Endothelial cell of umbilical vein (primary cell): ENCODE measurements at regions of chr11 and their contacts with region 1.

Region 1: GRCh38 chr11:61129639-61130523 is 27.6 kb downstream of the CD5 start:
- DNase-seq: peak; percentile 93
- H3K4me3 ChIP-seq: no peak overlapping the region
- H3K27ac ChIP-seq: peak overlapping the region; percentile 2
- H3K4me1 ChIP-seq: peaks cover 3% of the 10 kb centered on the region
- H3K27me3 ChIP-seq: peaks cover 9 to 10% of the 10 kb centered on the region in 2 experiments
- CTCF ChIP-seq: peak; percentile 100
- POLR2A ChIP-seq: no peak

Region 2: GRCh38 chr11:60913793-60914632 is 215.9 kb before region 1 on chr11 and contains the start of gene TMEM109:
- CTCF ChIA-PET with region 1: no interaction called
- POLR2A ChIA-PET with region 1: no interaction called
- dilution Hi-C with region 1: no loop called
- intact Hi-C with region 1: loop called (anchors 10 kb)
- DNase-seq: peak; percentile 98
- H3K4me3 ChIP-seq: peak within 1 kb of the TSS; percentile 43 to 79 (median 76)
- H3K27ac ChIP-seq: peak within 1 kb of the TSS; percentile 65
- H3K4me1 ChIP-seq: peaks cover 36% of the 10 kb centered on the region
- H3K27me3 ChIP-seq: peaks cover 0 to 2% of the 10 kb centered on the region in 2 experiments
- CTCF ChIP-seq: no peak
- POLR2A ChIP-seq: no peak
- total RNA-seq, gene TMEM109: 172 and 192 TPM in 2 replicates

Region 3: DNA sequence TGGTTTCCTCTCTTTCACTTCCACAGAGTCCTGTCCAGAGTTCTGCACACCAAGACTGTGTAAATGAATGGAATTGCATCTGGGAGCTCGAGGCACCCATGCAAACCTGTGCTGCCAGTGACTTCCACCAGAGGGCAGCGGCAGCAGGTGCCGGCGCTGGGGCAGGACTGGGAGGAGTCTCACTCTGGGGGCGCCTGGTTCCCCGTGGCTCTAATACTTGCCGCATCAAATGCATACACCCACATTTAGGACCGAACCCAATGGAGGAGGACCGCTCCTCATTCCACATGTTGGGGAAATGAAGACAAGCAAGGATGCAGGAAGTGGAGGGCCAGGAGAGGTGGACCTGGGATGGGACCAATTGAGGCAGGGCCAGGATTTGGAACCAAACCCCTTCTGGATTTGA is 159.5 kb before region 1 on chr11:
- CTCF ChIA-PET with region 1: interaction called, 9 read pairs
- POLR2A ChIA-PET with region 1: no interaction called
- dilution Hi-C with region 1: no loop called
- intact Hi-C with region 1: loop called (anchors 1 kb)
- DNase-seq: peak; percentile 36
- H3K4me3 ChIP-seq: no peak overlapping the region
- H3K27ac ChIP-seq: no peak overlapping the region
- H3K4me1 ChIP-seq: no peaks in the 10 kb centered on the region
- H3K27me3 ChIP-seq: peaks cover 3 to 8% of the 10 kb centered on the region in 2 experiments
- CTCF ChIP-seq: peak; percentile 82
- POLR2A ChIP-seq: no peak

Region 4: DNA sequence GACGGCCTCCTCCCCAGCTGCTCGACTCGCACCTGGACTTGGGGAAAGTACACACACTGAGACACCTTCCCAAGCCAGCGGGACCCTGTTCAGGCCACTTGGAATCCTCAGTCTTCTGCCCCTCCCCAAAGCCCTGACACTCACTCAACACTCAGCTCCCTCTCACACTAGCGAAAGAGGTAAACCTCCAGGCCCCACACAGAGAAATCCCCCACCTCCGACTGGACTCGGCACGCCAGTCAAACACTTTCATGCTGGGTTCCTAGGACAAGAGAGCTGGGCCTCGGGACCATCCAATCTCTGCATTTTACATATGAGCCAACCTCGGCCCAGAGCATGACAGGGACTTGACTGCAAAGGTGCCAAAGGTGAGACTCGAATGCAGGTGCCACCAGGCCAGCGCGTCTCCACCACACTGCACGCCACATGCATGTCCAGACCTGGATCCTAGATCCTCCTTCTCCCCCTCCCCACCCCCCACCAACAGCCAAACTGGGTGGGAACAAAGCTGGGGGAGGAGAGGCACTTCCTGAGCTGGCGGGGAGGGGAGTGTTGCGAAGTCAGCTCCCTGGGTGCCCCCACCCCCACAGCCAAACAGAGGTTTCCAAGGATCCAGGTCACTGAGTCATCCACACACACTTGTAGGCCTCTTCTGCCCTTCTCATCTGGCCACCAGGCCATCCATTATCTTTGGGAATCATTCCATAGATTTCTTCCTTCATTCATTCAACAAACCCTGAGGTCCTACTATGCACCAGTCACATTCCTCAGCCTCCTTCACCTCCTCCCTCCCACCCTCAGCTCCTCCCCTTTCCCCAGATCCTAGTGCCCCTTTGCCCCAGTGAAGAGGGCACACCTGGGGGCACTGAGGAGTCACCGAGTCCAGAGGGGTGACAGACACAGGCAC is 38.3 kb before region 1 on chr11:
- CTCF ChIA-PET with region 1: no interaction called
- POLR2A ChIA-PET with region 1: no interaction called
- dilution Hi-C with region 1: no loop called
- intact Hi-C with region 1: no loop called
- DNase-seq: no peak
- H3K4me3 ChIP-seq: no peak overlapping the region
- H3K27ac ChIP-seq: no peak overlapping the region
- H3K4me1 ChIP-seq: no peaks in the 10 kb centered on the region
- H3K27me3 ChIP-seq: no peaks in the 10 kb centered on the region
- CTCF ChIP-seq: no peak
- POLR2A ChIP-seq: no peak

Region 5: DNA sequence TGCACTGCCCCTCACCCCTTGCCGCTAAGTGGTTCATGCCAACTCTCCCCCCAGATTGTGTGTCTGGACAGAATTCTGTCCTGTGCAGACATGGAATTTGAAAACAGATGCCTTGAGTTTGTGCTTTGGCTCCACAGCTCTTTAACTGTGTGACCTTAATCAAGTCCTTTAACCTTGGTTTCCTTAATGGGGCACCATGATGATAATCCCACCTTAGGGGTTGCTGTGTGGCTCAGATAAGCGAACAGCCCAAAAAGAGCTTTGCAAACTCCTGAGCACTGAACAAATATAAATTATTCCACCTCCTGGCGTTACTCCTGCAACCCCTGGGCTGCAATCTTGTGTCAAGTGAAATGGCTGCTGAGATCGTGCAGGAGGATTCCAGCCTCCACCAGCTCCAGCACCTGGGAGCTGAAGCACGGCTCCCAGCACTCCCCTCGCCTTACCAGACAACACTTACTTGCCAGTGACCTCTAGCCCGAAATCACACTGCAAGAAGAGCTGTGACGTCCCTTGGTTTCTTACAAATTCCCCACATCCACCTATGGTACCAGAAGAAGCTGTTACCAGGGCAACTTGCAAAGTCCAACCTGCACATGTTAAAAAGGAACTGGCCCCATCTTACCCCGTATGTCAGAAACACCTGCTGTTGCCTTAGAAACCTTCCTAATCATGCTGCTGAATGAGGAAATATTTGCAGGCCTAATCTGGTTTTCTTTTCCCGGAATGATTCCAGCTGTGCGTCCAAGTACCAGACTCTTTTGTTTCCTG is 18.1 kb after region 1 on chr11:
- CTCF ChIA-PET with region 1: interaction called, 11 read pairs
- POLR2A ChIA-PET with region 1: no interaction called
- dilution Hi-C with region 1: no loop called
- intact Hi-C with region 1: no loop called
- DNase-seq: no peak
- H3K4me3 ChIP-seq: no peak overlapping the region
- H3K27ac ChIP-seq: no peak overlapping the region
- H3K4me1 ChIP-seq: peaks cover 12% of the 10 kb centered on the region
- H3K27me3 ChIP-seq: no peaks in the 10 kb centered on the region
- CTCF ChIP-seq: no peak
- POLR2A ChIP-seq: no peak

Region 6: GRCh38 chr11:61187505-61188130 is 57.7 kb after region 1 on chr11:
- CTCF ChIA-PET with region 1: interaction called, 19 read pairs
- POLR2A ChIA-PET with region 1: no interaction called
- dilution Hi-C with region 1: no loop called
- intact Hi-C with region 1: loop called (anchors 1 kb)
- DNase-seq: peak; percentile 81
- H3K4me3 ChIP-seq: no peak overlapping the region
- H3K27ac ChIP-seq: no peak overlapping the region
- H3K4me1 ChIP-seq: no peaks in the 10 kb centered on the region
- H3K27me3 ChIP-seq: no peaks in the 10 kb centered on the region
- CTCF ChIP-seq: peak; percentile 84 to 90
- POLR2A ChIP-seq: no peak

Region 7: GRCh38 chr11:61392981-61393595 is 263.2 kb after region 1 on chr11:
- CTCF ChIA-PET with region 1: no interaction called
- POLR2A ChIA-PET with region 1: no interaction called
- dilution Hi-C with region 1: no loop called
- intact Hi-C with region 1: no loop called
- DNase-seq: peak; percentile 36
- H3K4me3 ChIP-seq: peak overlapping the region; percentile 71 to 77 (median 71)
- H3K27ac ChIP-seq: no peak overlapping the region
- H3K4me1 ChIP-seq: peaks cover 11% of the 10 kb centered on the region
- H3K27me3 ChIP-seq: no peaks in the 10 kb centered on the region
- CTCF ChIP-seq: peak; percentile 8 to 16
- POLR2A ChIP-seq: no peak